Right lobe of liver (tissue), 6 donors: ENCODE measurements at regions of chr6 and their contacts with region 1.

Region 1: DNA sequence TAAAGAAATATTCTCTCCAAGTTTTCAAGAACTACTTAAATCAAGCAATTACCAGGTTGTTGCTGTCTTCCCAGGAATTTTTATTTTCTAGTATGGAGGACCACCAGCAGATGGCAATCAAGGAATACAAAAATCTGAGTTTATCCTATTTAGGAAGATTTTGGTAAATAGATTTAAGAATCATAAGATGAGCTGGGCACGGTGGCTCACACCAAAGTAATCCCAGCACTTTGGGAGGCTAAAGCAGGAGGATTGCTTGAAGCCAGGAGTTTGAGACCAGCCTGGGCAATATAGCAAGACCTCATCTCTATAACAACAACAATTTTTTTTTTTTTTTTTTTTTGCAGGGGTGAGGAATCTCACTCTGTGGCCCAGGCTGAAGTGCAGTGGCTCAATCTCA is 19.3 kb upstream of the SEC63 start:
- DNase-seq: no peak
- ATAC-seq: peak in 1 of 4 donors; percentile 37
- H3K4me3 ChIP-seq: no peak overlapping the region
- H3K27ac ChIP-seq: no peak overlapping the region
- H3K4me1 ChIP-seq: no peaks in the 10 kb centered on the region
- H3K27me3 ChIP-seq: no peaks in the 10 kb centered on the region
- CTCF ChIP-seq: peak; percentile 27 to 51 (median 34)
- POLR2A ChIP-seq: no peak

Region 2: DNA sequence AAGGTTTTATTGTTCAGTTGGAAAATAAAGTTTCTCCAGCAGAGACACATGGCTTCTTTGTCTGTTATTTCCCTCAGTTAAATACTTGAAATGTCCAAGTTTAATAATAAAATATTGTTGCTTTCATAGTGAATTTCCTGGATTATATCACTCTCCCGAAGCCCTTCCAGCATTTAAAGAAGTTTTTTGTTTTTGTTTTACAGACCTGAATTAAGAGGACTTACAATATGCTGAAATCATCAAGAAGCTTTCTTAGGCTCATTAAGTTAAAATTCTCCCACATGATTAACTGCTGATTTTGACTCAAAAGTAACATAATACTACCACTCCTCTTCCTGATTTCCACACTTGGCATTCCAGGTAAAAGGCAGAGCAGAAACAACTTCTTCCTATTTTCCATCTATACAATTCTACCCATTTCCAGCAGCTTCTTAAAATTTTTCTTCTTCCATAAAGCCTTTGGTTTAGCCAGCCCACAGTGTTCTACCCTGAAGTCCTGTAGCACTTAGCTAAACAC is 553.8 kb before region 1 on chr6:
- intact Hi-C with region 1: no loop called
- DNase-seq: no peak
- ATAC-seq: no peak
- H3K4me3 ChIP-seq: no peak overlapping the region
- H3K27ac ChIP-seq: no peak overlapping the region
- H3K4me1 ChIP-seq: no peaks in the 10 kb centered on the region
- H3K27me3 ChIP-seq: no peaks in the 10 kb centered on the region
- CTCF ChIP-seq: no peak
- POLR2A ChIP-seq: no peak

Region 3: DNA sequence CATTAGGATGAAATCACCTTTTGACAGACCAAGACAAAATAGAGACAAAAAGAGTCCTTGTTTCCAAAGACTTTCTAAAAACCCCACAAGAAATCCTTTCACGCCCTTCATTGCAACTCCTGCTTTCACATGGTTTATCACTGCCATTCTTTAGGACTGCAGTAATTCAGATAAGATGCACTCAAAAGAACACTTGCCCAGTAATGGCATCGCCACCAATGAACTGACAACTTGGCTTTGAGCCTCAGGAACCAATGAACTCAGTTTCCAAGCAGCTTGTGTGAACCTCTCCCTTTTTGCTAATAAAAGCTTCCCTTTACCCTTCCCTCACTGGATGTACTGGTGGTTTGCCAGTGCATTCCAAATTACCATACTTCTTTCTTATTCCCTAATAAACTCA is 75.4 kb after region 1 on chr6:
- intact Hi-C with region 1: loop called in 1 of 2 experiments (anchors 10 kb)
- DNase-seq: no peak
- ATAC-seq: no peak
- H3K4me3 ChIP-seq: no peak overlapping the region
- H3K27ac ChIP-seq: no peak overlapping the region
- H3K4me1 ChIP-seq: no peaks in the 10 kb centered on the region
- H3K27me3 ChIP-seq: no peaks in the 10 kb centered on the region
- CTCF ChIP-seq: no peak
- POLR2A ChIP-seq: no peak

Region 4: DNA sequence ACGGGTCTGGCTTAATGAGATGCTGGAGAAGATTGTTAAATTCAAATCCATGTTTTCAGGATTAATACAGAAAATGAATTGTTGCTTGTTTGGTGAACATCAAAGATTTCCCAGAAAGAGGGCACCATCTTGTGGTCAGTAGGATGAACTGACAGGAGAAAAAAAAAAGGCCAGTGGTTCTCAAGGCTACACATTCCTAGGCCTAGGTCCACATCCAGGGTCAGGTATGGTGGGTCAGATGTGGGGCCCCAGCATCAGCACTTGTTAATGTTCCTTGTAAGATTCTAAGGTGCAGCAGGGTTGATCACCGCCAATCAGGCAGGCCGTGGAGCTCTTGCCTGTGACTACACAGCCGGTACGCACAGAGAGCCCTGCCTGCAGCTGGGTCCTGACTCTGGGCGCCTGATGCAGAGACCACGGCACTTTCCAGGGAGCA is 549.5 kb after region 1 on chr6:
- intact Hi-C with region 1: loop called (anchors 10 kb)
- DNase-seq: no peak
- ATAC-seq: peak; percentile 72 to 79 (median 76)
- H3K4me3 ChIP-seq: no peak overlapping the region
- H3K27ac ChIP-seq: no peak overlapping the region
- H3K4me1 ChIP-seq: no peaks in the 10 kb centered on the region
- H3K27me3 ChIP-seq: no peaks in the 10 kb centered on the region
- CTCF ChIP-seq: peak; percentile 72 to 81 (median 80)
- POLR2A ChIP-seq: no peak